ENCODE measurements at regions of chr12 and their contacts with region 1.

Region 1: DNA sequence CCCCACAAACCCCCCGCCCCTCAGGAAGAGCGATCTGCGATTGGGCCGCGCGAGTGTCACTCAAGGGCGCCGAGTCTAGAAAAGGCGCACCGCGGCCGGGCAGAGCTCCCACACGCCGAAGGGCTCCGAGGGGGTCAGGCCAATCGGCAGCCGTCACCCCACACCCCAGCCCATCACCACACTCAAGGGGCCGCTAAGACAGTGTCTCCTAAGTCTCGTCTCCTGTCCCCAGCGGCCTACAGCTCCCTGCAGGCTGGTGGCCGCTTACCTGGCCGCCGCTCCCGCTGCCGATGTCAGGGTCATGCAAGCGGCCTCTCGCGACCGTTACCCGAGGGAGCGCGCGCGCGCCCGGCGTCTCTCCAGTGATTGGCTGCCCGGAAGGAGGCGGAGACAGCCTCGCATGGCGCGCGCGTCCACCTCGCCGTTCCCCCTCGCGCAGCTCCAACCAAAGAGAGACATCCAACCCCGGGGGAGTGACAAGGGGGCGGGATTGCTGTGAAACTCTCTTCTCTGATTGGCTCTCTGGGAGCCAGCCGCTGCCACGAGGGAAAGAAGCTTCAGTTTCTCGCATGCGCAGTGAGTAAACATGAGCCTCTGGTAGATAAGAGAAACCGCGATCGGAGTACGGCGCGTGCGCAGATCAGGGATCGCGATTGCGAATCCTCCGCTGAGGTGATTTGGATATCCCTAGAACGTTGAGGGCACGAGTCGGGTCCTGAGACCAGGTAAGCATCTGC is at the starts of genes MPHOSPH9 and MTRFR:
- DNase-seq: peak; percentile 100
- ATAC-seq: peak; percentile 91
- H3K4me3 Mint-ChIP-seq: peak within 1 kb of the TSS; percentile 97
- H3K27ac Mint-ChIP-seq: peak within 1 kb of the TSS; percentile 97
- H3K4me1 Mint-ChIP-seq: peaks cover 65% of the 10 kb centered on the region
- H3K27me3 Mint-ChIP-seq: no peaks in the 10 kb centered on the region
- total RNA-seq, gene MPHOSPH9: 148 to 149 TPM
- total RNA-seq, gene MTRFR: 28.2 to 30.0 TPM

Region 2: GRCh38 chr12:123043536-123044001 is 189.4 kb before region 1 on chr12:
- CTCF ChIA-PET with region 1: interaction called, 45 read pairs
- POLR2A ChIA-PET with region 1: interaction called, 15 read pairs
- DNase-seq: peak; percentile 90
- ATAC-seq: peak; percentile 99
- H3K4me3 Mint-ChIP-seq: peak overlapping the region; percentile 26
- H3K27ac Mint-ChIP-seq: peak overlapping the region; percentile 77
- H3K4me1 Mint-ChIP-seq: peaks cover 36% of the 10 kb centered on the region
- H3K27me3 Mint-ChIP-seq: no peaks in the 10 kb centered on the region

Region 3: DNA sequence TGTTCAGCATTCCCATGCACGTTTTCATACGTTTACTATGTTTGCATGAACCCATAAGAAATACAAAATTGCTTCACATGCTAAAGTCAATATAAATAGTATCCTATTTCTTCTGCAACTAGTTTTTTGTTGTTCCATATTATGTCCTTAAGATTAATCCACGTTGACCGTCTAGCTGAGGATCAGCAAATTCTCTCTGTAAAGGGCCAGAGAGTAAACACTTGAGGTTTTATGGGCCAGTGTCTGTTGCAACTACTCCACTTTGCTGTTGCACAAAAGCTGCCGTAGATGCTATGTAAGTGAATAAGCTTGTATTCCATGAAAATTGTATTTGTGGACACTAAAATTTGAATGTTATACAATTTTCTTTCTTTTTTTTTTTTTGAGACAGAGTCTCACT is 61.0 kb before region 1 on chr12:
- CTCF ChIA-PET with region 1: interaction called, 13 read pairs
- POLR2A ChIA-PET with region 1: interaction called, 4 read pairs
- DNase-seq: no peak
- ATAC-seq: no peak
- H3K4me3 Mint-ChIP-seq: no peak overlapping the region
- H3K27ac Mint-ChIP-seq: no peak overlapping the region
- H3K4me1 Mint-ChIP-seq: no peaks in the 10 kb centered on the region
- H3K27me3 Mint-ChIP-seq: no peaks in the 10 kb centered on the region

Region 4: DNA sequence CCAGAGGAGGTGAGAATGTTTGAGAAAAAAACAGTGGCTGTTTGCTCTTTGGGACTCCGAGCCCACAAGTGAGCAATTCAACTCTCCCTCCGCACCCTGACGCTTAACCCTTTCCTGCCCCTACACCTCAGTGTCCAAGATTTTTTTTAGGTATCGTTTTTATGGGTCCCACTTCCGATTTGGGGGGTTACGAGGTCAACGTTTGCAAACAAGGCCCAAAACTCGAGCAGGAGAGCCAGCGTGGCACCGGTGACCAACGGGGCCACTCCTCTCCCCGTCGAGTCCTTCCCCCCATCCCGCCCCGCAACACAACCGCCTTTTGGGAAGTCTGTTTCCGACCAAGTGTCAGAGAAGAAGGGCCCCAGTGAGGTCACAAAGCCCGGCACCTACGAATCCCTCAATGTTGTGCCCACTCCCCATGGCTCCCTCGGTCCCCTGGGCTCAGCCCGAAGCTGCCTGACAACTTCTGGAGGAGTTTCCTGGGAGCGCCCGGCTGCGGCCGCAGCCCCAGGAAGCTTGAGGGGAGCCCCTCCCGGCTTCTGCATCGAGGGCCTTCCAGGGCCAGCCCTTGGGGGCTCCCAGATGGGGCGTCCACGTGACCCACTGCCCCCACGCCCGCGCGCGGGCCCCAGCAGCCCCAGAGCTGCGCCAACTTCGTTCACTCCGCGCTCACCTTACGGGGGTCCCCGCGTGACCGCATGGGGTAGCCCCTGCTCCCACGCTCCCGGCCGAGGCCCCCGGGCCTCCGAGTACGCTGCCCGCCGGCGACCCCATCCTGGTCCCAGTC is 37.4 kb after region 1 on chr12:
- CTCF ChIA-PET with region 1: interaction called, 13 read pairs
- POLR2A ChIA-PET with region 1: interaction called, 12 read pairs
- DNase-seq: no peak
- ATAC-seq: peak; percentile 12
- H3K4me3 Mint-ChIP-seq: peak overlapping the region; percentile 84
- H3K27ac Mint-ChIP-seq: peak overlapping the region; percentile 88
- H3K4me1 Mint-ChIP-seq: peaks cover 32% of the 10 kb centered on the region
- H3K27me3 Mint-ChIP-seq: no peaks in the 10 kb centered on the region

Region 5: DNA sequence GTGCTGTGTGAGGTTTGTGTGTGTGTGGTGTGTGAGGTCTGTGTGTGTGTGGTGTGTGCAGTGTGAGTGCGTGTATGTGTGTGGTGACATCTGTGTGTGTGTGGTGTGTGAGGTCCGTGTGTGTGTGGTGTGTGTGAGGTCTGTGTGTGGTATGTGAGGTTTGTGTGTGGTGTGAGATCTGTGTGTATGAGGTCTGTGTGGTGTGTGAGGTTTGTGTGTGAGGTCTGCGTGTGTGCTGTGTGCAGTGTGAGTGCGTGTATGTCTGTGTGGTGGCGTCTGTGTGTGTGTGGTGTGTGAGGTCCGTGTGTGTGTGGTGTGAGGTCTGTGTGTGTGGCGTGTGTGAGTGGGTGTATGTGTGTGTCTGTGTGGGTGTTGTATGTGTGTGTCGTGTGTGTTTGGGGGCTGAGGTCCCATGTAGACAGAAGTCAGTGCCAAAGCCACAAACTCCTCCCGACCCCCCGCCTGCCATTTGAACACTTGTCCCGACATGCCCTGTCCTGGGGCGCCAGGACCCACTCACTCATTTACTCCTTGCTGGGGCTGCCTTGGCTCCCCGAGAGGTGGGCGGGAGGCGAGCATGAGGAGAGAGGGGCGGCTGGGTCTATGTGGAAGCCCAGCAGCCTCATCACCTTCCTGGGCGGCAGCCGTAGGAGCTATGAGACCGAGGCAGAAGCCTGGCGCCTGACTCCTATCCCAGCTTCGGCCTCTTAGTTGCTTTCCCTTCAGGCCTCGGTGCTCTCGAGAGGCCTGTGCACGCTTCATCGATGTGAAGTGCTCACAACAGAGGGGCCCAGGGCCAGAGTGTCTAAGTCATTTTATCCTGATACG is 280.1 kb after region 1 on chr12:
- CTCF ChIA-PET with region 1: no interaction called
- POLR2A ChIA-PET with region 1: no interaction called
- DNase-seq: no peak
- ATAC-seq: peak; percentile 60
- H3K4me3 Mint-ChIP-seq: no peak overlapping the region
- H3K27ac Mint-ChIP-seq: no peak overlapping the region
- H3K4me1 Mint-ChIP-seq: no peaks in the 10 kb centered on the region
- H3K27me3 Mint-ChIP-seq: no peaks in the 10 kb centered on the region

Region 6: DNA sequence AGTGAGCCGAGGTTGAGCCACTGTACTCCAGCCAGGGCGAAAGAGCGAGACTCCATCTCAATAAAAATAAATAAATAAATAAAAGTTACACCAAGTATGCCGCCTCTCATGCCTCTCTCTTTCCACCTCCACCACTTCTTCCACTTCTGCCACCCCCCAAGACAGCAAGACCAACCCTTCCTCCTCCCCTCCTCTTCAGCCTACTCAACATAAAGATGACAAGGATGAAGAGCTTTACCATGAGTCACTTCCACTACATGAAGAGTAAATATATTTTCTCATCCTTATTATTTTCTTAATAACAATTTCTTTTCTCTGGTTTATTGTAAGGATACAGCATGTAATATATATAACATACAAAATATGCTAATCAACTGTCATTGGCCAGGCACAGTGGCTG is 347.8 kb after region 1 on chr12:
- CTCF ChIA-PET with region 1: interaction called, 12 read pairs
- POLR2A ChIA-PET with region 1: no interaction called
- DNase-seq: no peak
- ATAC-seq: no peak
- H3K4me3 Mint-ChIP-seq: no peak overlapping the region
- H3K27ac Mint-ChIP-seq: no peak overlapping the region
- H3K4me1 Mint-ChIP-seq: peaks cover 17% of the 10 kb centered on the region
- H3K27me3 Mint-ChIP-seq: no peaks in the 10 kb centered on the region